Posterior cingulate gyrus (tissue), 11 donors: ENCODE measurements at regions of chr11 and their contacts with region 1.

Region 1: GRCh38 chr11:1335811-1336761 is 26.7 kb upstream of the TOLLIP start:
- DNase-seq: peak in 5 of 10 donors; percentile 44 to 93 (median 61)

Region 2: DNA sequence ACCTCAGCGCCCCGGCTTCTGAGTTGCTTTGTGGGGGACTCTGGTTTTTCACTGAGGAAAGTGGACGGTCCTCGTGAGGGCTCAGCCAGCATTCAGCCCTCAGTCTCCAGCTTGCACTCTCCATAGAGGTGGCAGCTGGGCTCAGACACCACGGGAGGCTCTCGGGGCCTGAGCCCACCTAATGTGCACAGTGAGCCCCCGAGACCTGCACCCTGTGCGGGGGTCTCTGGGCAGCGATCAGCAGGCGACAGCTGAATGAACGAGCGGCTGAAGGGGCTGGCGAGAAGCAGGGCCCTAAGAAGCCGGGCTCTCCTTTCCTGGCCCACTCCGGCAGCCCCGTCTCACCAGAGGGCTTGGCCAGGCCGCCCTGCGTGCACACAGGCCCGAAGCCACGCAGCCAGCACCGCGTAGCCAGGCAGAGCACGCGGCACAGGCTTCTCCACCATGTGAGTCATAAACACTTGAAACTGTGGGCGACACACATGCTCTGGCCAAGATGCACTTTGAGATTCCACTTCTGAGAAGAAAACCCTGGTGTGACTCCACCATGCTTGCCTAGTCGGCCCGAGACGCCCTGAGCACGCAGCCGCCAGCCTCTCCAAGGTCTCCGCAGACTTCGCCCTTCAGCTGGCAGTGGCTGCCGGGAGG is 54.6 kb before region 1 on chr11:
- intact Hi-C with region 1: no loop called
- DNase-seq: peak in 5 of 10 donors; percentile 42 to 90 (median 81)

Region 3: GRCh38 chr11:1309498-1310317 is 26.4 kb before region 1 on chr11 and contains the start of gene TOLLIP:
- intact Hi-C with region 1: loop called (anchors 2 kb)
- DNase-seq: peak; percentile 91 to 99 (median 96)

Region 4: DNA sequence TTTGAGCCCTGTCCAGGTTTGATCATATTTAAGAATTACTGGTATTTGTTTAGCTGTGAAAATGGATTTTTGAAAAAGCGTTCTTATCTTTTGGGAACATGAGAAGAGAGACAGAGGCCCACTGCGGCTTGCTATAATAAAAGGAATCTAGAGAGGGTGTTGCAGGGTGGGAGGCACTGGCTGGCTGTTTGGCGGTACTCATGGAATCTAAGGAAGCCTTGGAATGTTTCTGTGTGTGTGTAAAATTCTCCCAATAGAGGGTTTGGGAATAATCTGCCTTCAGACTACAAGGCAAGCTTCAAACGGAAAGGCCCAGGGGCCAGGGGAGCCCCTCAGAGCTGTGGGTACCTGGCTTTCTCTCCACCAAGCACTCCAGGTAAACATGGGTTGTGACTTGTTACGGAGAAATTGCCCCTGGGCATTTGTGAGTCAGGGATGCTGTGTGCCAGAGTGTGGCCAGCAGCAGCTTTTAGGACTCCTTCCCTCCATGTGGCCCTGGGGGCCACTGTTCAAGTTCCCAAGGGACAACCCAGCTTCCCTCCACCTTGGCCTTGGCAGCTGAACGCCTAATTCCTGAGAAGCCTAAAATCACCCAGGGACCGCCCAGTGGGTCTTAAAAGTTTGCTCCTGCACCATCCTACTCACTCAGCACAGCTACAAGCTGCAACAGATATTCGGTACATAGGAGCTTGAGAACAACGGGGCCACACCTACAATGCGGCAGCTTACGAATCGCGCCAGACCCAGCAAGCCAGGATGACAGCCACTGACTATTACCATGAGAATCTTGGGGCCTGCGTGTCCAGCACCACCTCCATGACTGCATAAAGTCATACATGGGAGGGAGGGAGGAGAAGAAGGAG is 484.6 kb after region 1 on chr11:
- intact Hi-C with region 1: no loop called
- DNase-seq: peak in 1 of 10 donors; percentile 52